Posterior vena cava (tissue), 2 donors: ENCODE measurements at regions of chr2 and their contacts with region 1.

Region 1: GRCh38 chr2:53646788-53647187 is 120.8 kb upstream of the CHAC2 start:
- DNase-seq: no peak

Region 2: DNA sequence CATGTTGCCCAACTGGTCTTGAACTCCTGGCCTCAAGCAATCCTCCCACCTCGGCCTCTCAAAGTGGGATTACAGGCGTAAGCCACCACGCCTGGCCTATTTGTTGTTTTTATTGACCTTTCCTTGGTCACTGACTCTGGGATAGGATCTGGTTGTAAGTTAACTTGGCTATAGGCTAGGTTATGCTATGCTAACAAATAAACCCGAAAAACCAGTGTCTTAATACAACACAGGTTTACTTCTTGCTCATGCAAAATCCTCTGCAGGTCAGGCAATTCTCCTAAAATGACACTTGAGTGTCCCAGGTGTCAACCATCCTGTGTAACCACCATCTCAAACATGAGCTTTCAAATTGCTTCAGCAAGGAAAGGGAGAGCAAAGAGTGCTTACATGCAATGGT is 41.2 kb after region 1 on chr2:
- intact Hi-C with region 1: loop called in 1 of 2 experiments (anchors 2 kb)
- DNase-seq: no peak